GM18951 (cell line): ENCODE measurements at regions of chr1 and their contacts with region 1.

Region 1: GRCh38 chr1:38834937-38835827 is 24.4 kb downstream of the RRAGC start:
- POLR2A ChIP-seq: no peak

Region 2: GRCh38 chr1:37890378-37891014 is 944.7 kb before region 1 on chr1:
- in situ Hi-C with region 1: loop called (anchors 25 kb)
- POLR2A ChIP-seq: no peak